Activated CD4-positive, alpha-beta T cell treated with anti-CD3 and anti-CD28 coated beads for 36 hours (primary cell): ENCODE measurements at regions of chr12 and their contacts with region 1.

Region 1: DNA sequence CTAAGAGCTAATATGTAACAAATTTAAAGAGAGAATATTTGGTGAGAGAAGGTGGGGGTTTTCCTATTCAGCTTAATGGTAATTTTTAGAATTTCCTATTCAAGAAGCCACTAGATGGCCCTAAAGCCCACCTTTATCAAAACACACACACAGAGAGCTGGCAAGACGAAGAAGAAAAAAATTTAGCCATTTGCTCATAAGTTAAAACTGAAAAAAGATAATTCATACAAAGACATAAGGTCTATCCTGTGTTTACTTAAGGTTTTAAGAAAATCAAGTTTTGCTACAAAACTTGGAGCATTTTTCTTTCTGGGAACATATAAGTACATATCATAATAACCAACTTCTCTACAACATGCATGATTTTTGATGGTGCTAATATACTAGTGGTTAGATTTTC is 46.8 kb upstream of the PCED1B start:
- DNase-seq: no peak
- ATAC-seq: peak; percentile 81
- H3K4me3 Mint-ChIP-seq: no peak overlapping the region
- H3K27ac Mint-ChIP-seq: peak overlapping the region; percentile 35
- H3K4me1 Mint-ChIP-seq: peaks cover 40% of the 10 kb centered on the region
- H3K27me3 Mint-ChIP-seq: no peaks in the 10 kb centered on the region

Region 2: GRCh38 chr12:46944088-46944487 is 88.6 kb before region 1 on chr12:
- CTCF ChIA-PET with region 1: no interaction called
- POLR2A ChIA-PET with region 1: no interaction called
- intact Hi-C with region 1: no loop called
- DNase-seq: peak; percentile 11
- ATAC-seq: no peak
- H3K4me3 Mint-ChIP-seq: no peak overlapping the region
- H3K27ac Mint-ChIP-seq: no peak overlapping the region
- H3K4me1 Mint-ChIP-seq: no peaks in the 10 kb centered on the region
- H3K27me3 Mint-ChIP-seq: peaks cover 2% of the 10 kb centered on the region

Region 3: DNA sequence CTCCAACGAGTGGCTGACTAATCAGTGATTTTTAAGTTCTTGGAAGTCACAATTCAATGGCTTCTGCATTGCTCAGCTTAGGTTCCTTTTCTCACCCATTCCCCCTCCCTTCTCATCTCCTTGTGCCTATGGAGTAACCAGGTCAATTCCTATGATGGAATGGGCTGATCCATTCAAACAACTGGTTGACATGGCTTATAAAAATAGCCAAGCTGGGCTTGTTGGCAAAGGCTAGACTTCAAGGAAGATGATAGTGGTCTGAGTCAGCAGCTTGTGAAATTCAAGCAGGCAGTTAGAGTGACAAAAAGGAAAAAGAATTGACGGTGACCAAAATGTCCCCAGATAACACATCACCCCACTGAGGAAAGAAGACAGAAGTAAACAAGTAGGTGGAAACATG is 73.2 kb before region 1 on chr12:
- CTCF ChIA-PET with region 1: no interaction called
- POLR2A ChIA-PET with region 1: no interaction called
- intact Hi-C with region 1: no loop called
- DNase-seq: no peak
- ATAC-seq: no peak
- H3K4me3 Mint-ChIP-seq: no peak overlapping the region
- H3K27ac Mint-ChIP-seq: no peak overlapping the region
- H3K4me1 Mint-ChIP-seq: no peaks in the 10 kb centered on the region
- H3K27me3 Mint-ChIP-seq: peaks cover 3% of the 10 kb centered on the region

Region 4: GRCh38 chr12:47054659-47055058 is 22.0 kb after region 1 on chr12:
- CTCF ChIA-PET with region 1: interaction called, 11 read pairs
- POLR2A ChIA-PET with region 1: no interaction called
- intact Hi-C with region 1: no loop called
- DNase-seq: no peak
- ATAC-seq: no peak
- H3K4me3 Mint-ChIP-seq: no peak overlapping the region
- H3K27ac Mint-ChIP-seq: no peak overlapping the region
- H3K4me1 Mint-ChIP-seq: no peaks in the 10 kb centered on the region
- H3K27me3 Mint-ChIP-seq: no peaks in the 10 kb centered on the region

Region 5: GRCh38 chr12:47190271-47190750 is 157.7 kb after region 1 on chr12:
- CTCF ChIA-PET with region 1: interaction called, 4 read pairs
- POLR2A ChIA-PET with region 1: interaction called, 3 read pairs
- intact Hi-C with region 1: loop called in 1 of 2 experiments (anchors 5 kb)
- DNase-seq: peak; percentile 57
- ATAC-seq: peak; percentile 84
- H3K4me3 Mint-ChIP-seq: peak overlapping the region; percentile 26
- H3K27ac Mint-ChIP-seq: peak overlapping the region; percentile 79
- H3K4me1 Mint-ChIP-seq: peaks cover 82% of the 10 kb centered on the region
- H3K27me3 Mint-ChIP-seq: no peaks in the 10 kb centered on the region

Region 6: DNA sequence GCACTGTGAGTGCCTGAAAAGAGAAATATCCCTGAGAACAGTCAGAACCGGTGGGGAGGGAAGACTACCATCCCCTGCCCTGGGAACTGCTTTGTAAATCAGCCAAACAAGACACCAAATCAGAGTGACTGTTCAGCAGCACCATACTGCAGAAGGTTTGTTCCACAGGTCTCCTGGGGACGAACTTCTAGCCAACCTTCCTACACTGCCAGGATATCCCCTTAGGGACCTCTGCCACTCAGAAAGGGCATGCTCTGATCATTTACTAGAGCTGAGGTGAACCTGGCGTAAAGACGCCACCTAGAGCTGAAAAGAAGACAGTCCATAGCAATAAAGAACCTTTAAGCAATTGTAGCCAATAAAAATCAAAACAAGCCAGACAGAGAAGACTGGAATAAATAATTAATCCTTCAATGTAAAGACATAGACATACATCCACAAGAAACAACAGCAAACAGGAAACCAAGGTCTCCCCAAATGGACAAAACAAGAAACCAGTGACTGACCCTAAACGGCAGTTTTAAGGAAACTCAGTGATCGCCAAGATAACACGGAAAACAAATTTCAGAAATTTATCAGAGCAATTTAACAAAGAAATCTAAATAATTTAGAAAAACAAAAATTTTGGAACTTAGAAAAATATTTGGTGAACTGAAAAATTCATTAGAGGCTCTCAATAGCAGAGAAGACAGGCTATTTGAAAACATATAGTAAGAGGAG is 275.2 kb after region 1 on chr12:
- CTCF ChIA-PET with region 1: interaction called, 19 read pairs
- POLR2A ChIA-PET with region 1: no interaction called
- intact Hi-C with region 1: loop called (anchors 1 kb)
- DNase-seq: peak; percentile 73
- ATAC-seq: peak; percentile 84
- H3K4me3 Mint-ChIP-seq: peak overlapping the region; percentile 77
- H3K27ac Mint-ChIP-seq: peak overlapping the region; percentile 96
- H3K4me1 Mint-ChIP-seq: peaks cover 70% of the 10 kb centered on the region
- H3K27me3 Mint-ChIP-seq: no peaks in the 10 kb centered on the region

Region 7: DNA sequence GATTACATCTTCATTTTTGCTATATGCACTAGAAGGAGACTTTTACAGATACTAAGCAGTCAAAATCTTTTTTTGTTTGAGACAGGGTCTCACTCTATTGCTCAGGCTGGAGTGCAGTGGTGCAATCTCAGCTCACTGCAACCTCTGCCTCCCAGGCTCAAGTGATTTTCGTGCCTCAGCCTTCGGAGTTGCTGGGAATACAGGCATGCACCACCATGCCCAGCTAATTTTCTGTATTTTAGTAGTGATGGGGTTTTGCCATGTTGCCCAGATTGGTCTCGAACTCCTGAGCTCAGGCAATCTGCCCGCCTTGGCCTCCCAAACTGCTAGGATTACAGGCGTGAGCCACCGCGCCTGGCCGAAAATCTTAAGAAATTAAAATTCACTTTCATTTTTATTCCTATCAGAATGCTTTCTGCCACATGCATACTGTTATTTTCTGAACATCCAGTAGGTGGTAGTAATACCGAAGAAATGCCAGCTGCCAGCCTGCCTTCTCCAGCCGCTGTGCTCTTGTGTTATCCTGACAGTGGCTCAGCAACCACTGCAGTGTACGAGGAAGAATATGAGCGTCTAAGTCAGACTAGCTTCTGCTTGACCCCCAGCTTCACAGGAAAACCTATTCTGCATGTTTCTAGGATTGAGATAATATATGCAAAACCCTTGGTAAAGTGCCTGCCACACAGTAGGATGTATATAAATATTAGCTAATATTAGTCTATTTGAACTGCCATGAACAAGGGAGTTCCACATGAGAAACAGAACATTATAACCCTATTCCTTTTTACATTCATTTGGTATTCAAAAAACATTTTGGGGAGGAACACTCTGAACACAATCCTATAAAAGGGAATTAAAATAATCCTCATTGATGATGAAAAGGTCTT is 619.0 kb after region 1 on chr12:
- CTCF ChIA-PET with region 1: interaction called, 24 read pairs
- POLR2A ChIA-PET with region 1: no interaction called
- intact Hi-C with region 1: loop called (anchors 1 to 10 kb)
- DNase-seq: peak; percentile 70
- ATAC-seq: peak; percentile 93
- H3K4me3 Mint-ChIP-seq: no peak overlapping the region
- H3K27ac Mint-ChIP-seq: peak overlapping the region; percentile 11
- H3K4me1 Mint-ChIP-seq: peaks cover 20% of the 10 kb centered on the region
- H3K27me3 Mint-ChIP-seq: no peaks in the 10 kb centered on the region